PC-9 (cell line): ENCODE measurements at regions of chr15 and their contacts with region 1.

Region 1: DNA sequence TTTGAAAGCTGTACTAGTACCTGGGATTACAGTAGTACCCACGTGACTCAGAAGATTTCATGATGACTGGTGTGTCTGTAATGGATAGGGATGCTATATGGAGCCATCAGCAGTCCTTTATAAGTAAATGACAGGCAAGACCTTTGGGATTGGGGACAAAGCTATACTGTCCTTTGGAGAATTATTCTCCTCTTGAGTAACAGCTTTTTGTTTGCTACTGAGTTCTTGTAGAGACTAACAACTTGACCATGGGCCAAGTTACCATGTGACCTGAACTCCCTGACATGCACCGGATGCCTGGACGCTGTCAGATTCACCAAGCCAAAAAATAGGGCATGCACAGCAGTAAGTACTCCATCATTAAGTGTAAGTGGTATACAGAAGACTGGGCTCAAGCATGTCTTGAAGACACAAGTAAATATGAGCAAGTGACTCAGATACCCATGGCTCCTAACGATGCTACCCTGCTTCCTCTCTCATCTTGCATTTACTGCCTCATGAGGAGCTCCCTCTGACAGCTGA is 12.9 kb downstream of the SEC11A start:
- DNase-seq: no peak
- H3K4me3 ChIP-seq: no peak overlapping the region
- H3K27ac ChIP-seq: 0 out of 2 replicates have a peak overlapping the region, but pooled peaks have one; percentile 18
- H3K4me1 ChIP-seq: no peaks in the 10 kb centered on the region
- H3K27me3 ChIP-seq: no peaks in the 10 kb centered on the region
- CTCF ChIP-seq: no peak

Region 2: DNA sequence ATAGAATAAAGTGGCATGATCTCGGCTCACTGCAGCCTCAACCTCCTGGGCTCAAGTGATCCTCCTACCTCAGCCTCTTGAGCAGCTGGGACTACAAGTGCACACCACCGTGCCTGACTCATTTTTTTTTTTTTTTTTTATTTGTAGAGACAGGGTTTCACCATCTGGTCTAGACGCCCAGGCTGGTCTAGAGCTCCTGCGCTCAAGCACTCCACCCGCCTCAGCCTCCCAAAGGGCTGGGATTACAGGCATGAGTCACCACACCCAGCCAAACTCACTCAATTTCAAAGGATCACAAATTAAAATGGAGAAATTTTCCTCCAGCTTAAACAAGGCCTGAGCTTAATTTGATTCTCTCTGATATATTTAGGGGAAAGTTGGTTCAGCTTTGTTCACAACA is 17.7 kb before region 1 on chr15:
- CTCF ChIA-PET with region 1: no interaction called
- POLR2A ChIA-PET with region 1: interaction called, 25 read pairs
- intact Hi-C with region 1: no loop called
- DNase-seq: peak; percentile 59 to 78
- H3K4me3 ChIP-seq: no peak overlapping the region
- H3K27ac ChIP-seq: peak overlapping the region; percentile 57
- H3K4me1 ChIP-seq: peaks cover 19% of the 10 kb centered on the region
- H3K27me3 ChIP-seq: no peaks in the 10 kb centered on the region
- CTCF ChIP-seq: no peak

Region 3: GRCh38 chr15:85024509-85025214 is 321.6 kb after region 1 on chr15:
- CTCF ChIA-PET with region 1: no interaction called
- POLR2A ChIA-PET with region 1: no interaction called
- intact Hi-C with region 1: no loop called
- DNase-seq: peak; percentile 16 to 61
- H3K4me3 ChIP-seq: no peak overlapping the region
- H3K27ac ChIP-seq: 0 out of 2 replicates have a peak overlapping the region, but pooled peaks have one; percentile 22
- H3K4me1 ChIP-seq: peaks cover 22% of the 10 kb centered on the region
- H3K27me3 ChIP-seq: no peaks in the 10 kb centered on the region
- CTCF ChIP-seq: no peak